ENCODE measurements at regions of chr19 and their contacts with region 1.

Region 1: GRCh38 chr19:53580976-53581800 is 43.2 kb downstream of the ZNF331 start:
- DNase-seq: no peak
- H3K4me3 ChIP-seq: no peak overlapping the region
- H3K27ac ChIP-seq: no peak overlapping the region
- H3K4me1 ChIP-seq: no peaks in the 10 kb centered on the region
- H3K27me3 ChIP-seq: no peaks in the 10 kb centered on the region
- CTCF ChIP-seq: no peak

Region 2: DNA sequence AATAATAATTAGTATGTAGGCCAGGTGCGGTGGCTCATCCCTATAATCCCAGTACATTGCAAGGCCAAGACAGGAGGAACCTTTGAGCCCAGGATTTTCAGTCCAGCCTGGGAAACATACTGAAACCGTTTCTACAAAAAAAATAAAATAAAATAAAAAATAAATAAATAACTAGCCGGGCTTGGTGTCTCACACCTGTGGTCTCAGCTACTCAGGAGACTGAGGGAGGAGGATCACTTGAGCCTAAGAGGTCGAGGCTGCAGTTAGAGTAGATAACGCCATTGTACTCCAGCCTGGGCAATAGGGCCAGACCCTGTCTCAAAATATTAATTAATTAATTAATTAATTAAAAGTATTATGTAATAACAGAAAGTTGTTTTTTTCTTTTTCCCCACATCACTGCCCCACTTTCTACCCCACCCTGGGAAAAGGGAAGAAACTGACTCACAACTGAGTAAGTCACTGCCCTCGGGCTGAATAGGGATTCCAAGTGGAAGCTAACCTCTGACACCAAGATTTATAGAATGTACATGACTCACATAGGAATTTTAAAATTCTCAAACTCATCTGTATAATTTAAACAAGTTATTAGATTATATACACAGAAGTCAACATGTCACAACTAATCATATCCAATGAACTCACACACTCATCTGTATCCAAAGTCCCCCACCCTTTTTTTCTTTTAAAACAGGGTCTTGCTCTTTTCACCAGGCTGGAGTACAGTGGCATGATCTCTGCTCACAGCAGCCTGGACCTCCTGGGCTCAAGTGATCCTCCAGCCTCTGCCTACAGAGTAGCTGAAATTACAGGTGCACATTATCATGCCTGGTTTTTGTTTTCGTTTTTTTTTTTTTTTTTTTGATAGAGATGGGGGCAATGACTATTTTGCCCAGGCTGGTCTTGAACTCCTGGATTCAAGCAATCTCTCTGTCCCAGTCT is 858.9 kb before region 1 on chr19:
- CTCF ChIA-PET with region 1: interaction called, 11 read pairs
- POLR2A ChIA-PET with region 1: no interaction called
- intact Hi-C with region 1: no loop called
- DNase-seq: peak; percentile 76 to 96
- H3K4me3 ChIP-seq: no peak overlapping the region
- H3K27ac ChIP-seq: peak overlapping the region; percentile 61
- H3K4me1 ChIP-seq: peaks cover 11% of the 10 kb centered on the region
- H3K27me3 ChIP-seq: no peaks in the 10 kb centered on the region
- CTCF ChIP-seq: no peak

Region 3: DNA sequence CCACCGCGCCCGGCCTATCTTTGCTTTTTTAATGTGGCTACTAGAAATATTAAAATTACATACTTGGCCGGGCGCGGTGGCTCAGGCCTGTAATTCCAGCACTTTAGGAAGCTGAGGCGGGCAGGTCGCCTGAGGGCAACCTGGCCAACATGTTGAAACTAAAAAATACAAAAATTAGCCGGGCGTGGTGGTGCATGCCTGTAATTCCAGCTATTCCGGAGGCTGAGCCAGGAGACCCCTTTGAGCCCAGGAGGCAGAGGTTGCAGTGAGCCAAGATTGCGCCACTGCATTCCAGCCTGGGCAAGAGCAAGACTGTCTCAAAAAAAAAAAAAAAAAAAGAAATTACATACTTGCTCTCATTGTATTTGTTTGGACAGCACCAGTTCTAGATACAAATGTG is 15.8 kb after region 1 on chr19:
- CTCF ChIA-PET with region 1: interaction called, 10 read pairs
- POLR2A ChIA-PET with region 1: no interaction called
- intact Hi-C with region 1: no loop called
- DNase-seq: peak; percentile 90 to 91
- H3K4me3 ChIP-seq: no peak overlapping the region
- H3K27ac ChIP-seq: peak overlapping the region; percentile 40
- H3K4me1 ChIP-seq: peaks cover 15% of the 10 kb centered on the region
- H3K27me3 ChIP-seq: no peaks in the 10 kb centered on the region
- CTCF ChIP-seq: no peak